ENCODE measurements at regions of chr2 and their contacts with region 1.

Region 1: GRCh38 chr2:102063941-102064678 is 72.3 kb downstream of the IL1R2 start:
- DNase-seq: peak; percentile 81
- H3K4me3 ChIP-seq: no peak overlapping the region
- H3K27ac ChIP-seq: peak overlapping the region; percentile 88 to 93 (median 91)
- H3K4me1 ChIP-seq: peaks cover 21 to 64% (median 38%) of the 10 kb centered on the region in 4 donors
- H3K27me3 ChIP-seq: no peaks in the 10 kb centered on the region
- CTCF ChIP-seq: no peak
- EP300 ChIP-seq: peak; percentile 98
- POLR2A ChIP-seq: no peak

Region 2: GRCh38 chr2:102103992-102104871 is 40.1 kb after region 1 on chr2:
- in situ Hi-C with region 1: no loop called
- intact Hi-C with region 1: loop called (anchors 2 kb)
- DNase-seq: peak; percentile 70
- H3K4me3 ChIP-seq: peak overlapping the region in 3 of 4 donors; percentile 20 to 42 (median 21)
- H3K27ac ChIP-seq: peak overlapping the region; percentile 70 to 76 (median 72)
- H3K4me1 ChIP-seq: peaks cover 0 to 61% (median 34%) of the 10 kb centered on the region in 4 donors
- H3K27me3 ChIP-seq: no peaks in the 10 kb centered on the region
- CTCF ChIP-seq: no peak
- EP300 ChIP-seq: no peak
- POLR2A ChIP-seq: peak; percentile 13

Region 3: DNA sequence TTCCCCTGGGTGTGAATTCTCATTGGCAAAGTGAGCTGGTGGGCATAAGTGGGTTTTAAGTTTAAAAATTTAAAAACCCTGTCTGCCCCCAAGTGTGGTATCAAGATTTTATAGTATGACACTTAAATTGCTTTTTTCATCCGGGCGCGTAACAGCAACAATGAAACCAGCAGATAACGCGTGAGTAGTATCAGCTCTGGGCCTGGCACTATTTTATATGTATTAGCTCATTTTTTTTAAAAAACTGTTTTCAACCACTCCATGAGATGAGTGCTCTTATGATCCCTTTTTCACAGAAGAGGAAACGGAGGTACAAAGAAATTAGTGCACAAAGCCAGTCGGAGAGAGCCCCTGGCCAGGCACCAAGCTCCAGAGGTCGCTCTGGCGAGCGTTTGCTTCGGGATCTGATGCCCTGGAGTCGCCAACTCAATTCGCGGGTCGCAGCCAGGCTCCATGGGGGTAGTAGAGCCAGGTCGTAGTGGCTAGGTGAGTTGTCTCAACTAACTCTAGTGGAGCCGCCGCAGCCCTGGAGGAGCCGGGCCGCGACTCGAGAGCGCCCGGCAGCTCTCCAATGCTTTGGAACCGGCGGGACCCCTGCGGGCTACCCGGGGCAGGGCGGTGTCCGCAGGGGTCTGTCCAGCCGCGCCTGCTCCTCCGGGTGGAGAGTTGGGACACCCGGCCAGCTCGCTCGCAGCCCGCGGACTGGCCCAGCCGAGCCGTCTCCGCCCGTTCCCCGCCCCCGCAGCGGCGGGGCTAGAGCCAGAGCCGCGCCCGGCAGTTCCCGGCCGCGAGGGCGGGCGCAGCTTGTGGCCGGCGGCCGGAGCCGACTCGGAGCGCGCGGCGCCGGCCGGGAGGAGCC is 78.1 kb after region 1 on chr2 and contains the start of gene IL1R1:
- in situ Hi-C with region 1: no loop called
- intact Hi-C with region 1: loop called (anchors 5 kb)
- DNase-seq: peak; percentile 81
- H3K4me3 ChIP-seq: peak within 1 kb of the TSS; percentile 49 to 71 (median 58)
- H3K27ac ChIP-seq: peak within 1 kb of the TSS; percentile 88 to 93 (median 92)
- H3K4me1 ChIP-seq: peaks cover 0 to 6% (median 3%) of the 10 kb centered on the region in 4 donors
- H3K27me3 ChIP-seq: no peaks in the 10 kb centered on the region
- CTCF ChIP-seq: no peak
- EP300 ChIP-seq: no peak
- POLR2A ChIP-seq: peak; percentile 75
- total RNA-seq, gene IL1R1: 20.2 to 58.0 (median 36.2) TPM

Measured in transverse colon (tissue), 4 donors.